ENCODE measurements at regions of chr2 and their contacts with region 1.

Region 1: GRCh38 chr2:198127627-198128026 is 323.2 kb downstream of the PLCL1 start:
- DNase-seq: peak in 4 of 5 donors; percentile 38 to 60 (median 44)
- ATAC-seq: peak; percentile 66 to 87 (median 78)
- H3K4me3 ChIP-seq: no peak overlapping the region
- H3K27ac ChIP-seq: no peak overlapping the region
- H3K4me1 ChIP-seq: peaks cover 0 to 19% (median 7%) of the 10 kb centered on the region in 12 donors
- H3K27me3 ChIP-seq: no peaks in the 10 kb centered on the region
- CTCF ChIP-seq: peak; percentile 49 to 81 (median 68)
- POLR2A ChIP-seq: no peak

Region 2: DNA sequence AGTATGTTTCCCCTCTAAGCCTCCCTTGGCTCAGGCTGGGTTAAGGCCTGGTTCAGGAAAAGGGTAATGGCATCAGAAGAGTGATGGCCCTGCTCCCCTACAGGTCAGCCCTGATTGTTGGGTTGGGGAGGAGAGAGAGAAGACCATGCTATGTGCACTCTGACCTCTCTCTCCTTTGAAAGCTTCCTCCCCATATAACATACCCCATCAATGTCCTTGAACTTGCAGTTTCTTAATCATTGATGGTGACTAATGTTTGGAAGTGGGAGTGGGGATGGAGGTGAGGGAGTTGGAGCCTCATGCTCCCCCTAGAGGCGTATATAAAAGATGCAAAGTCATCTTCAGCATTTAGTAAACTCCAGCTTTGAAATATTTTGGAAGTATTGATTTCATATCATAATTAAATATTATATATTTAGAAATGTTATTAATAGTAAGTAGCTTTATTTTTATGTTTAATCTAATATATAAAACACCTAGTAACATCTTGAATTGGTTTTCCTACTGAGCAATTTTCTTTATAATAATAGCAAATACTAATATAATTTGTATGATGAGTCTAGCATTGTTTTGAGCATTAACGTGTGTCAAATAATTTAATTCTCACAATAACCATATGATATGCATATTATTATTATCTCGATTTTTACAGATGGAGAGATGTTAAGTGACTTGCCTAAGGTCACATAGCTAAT is 314.4 kb before region 1 on chr2:
- intact Hi-C with region 1: loop called in 1 of 10 experiments (anchors 2 kb)
- DNase-seq: no peak
- ATAC-seq: peak in 1 of 4 donors; percentile 23
- H3K4me3 ChIP-seq: no peak overlapping the region
- H3K27ac ChIP-seq: no peak overlapping the region
- H3K4me1 ChIP-seq: peaks cover 0 to 26% (median 1%) of the 10 kb centered on the region in 12 donors
- H3K27me3 ChIP-seq: no peaks in the 10 kb centered on the region
- CTCF ChIP-seq: peak; percentile 31 to 60 (median 44)
- POLR2A ChIP-seq: no peak

Region 3: DNA sequence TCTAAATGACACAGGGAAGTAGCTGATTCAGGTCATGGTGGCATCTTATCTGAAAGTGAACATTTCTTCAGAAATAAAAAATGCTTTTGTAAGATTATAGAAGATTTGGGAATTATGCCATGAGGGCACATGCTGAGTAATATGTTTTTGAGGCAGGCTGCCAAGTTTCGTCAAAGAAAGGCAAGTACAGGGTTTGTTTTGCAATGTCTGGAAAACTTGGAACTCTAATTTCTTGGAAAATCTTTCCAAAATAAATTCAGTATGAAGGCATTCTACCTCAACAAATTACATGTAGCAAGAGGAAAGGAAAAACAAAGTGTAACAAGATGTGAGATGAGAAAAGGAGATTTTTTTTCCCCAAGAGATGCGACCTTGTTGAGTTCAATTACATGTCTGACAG is 155.6 kb before region 1 on chr2:
- intact Hi-C with region 1: loop called in 1 of 10 experiments (anchors 10 kb)
- DNase-seq: peak in 2 of 5 donors; percentile 32 to 43
- ATAC-seq: peak in 1 of 4 donors; percentile 38
- H3K4me3 ChIP-seq: no peak overlapping the region
- H3K27ac ChIP-seq: peak overlapping the region in 3 of 12 donors; percentile 12 to 42 (median 39)
- H3K4me1 ChIP-seq: peaks cover 0 to 55% (median 22%) of the 10 kb centered on the region in 12 donors
- H3K27me3 ChIP-seq: no peaks in the 10 kb centered on the region
- CTCF ChIP-seq: no peak
- POLR2A ChIP-seq: no peak

Region 4: GRCh38 chr2:197986977-197987376 is 140.7 kb before region 1 on chr2:
- intact Hi-C with region 1: loop called in 1 of 10 experiments (anchors 10 kb)
- DNase-seq: no peak
- ATAC-seq: no peak
- H3K4me3 ChIP-seq: no peak overlapping the region
- H3K27ac ChIP-seq: no peak overlapping the region
- H3K4me1 ChIP-seq: peaks cover 0 to 20% (median 1%) of the 10 kb centered on the region in 12 donors
- H3K27me3 ChIP-seq: no peaks in the 10 kb centered on the region
- CTCF ChIP-seq: no peak
- POLR2A ChIP-seq: no peak

Region 5: GRCh38 chr2:198080879-198081765 is 46.5 kb before region 1 on chr2:
- intact Hi-C with region 1: no loop called
- DNase-seq: no peak
- ATAC-seq: no peak
- H3K4me3 ChIP-seq: no peak overlapping the region
- H3K27ac ChIP-seq: no peak overlapping the region
- H3K4me1 ChIP-seq: peaks cover 0 to 9% (median 0%) of the 10 kb centered on the region in 12 donors
- H3K27me3 ChIP-seq: no peaks in the 10 kb centered on the region
- CTCF ChIP-seq: no peak
- POLR2A ChIP-seq: no peak

Region 6: DNA sequence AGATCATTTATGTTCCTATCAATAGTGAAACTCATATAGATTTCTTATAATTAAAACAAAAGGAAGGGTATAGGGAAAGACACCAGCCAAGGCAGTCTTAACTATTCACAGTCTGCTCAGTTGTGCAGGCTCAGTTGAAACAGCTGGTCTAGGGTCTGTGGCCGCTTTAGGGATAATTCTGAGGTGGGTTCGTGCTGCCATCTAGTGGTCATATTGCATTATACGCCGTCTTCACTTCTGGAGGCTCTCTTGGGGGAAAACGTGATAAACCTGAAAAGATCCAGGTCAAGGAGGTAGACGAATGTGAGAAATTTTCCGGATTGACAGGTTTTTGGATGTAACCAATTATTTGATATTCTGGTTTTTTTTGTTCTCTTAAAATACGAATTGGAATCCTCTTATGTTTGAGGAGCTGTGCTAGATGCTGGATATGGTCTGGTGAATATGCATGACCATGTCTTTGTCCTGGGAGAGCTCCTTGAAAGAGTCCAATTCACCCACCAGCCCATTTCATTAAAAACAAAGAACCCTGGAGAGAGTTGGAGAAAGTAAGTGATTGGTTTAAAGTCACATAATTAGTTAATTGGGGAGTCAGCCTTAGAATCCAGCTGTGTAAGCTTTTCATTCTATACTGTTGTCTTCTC is 169.2 kb after region 1 on chr2:
- intact Hi-C with region 1: loop called in 6 of 10 experiments (anchors 5 to 10 kb)
- DNase-seq: peak in 4 of 5 donors; percentile 25 to 41 (median 38)
- ATAC-seq: peak; percentile 64 to 82 (median 76)
- H3K4me3 ChIP-seq: no peak overlapping the region
- H3K27ac ChIP-seq: no peak overlapping the region
- H3K4me1 ChIP-seq: peaks cover 0 to 5% (median 0%) of the 10 kb centered on the region in 12 donors
- H3K27me3 ChIP-seq: no peaks in the 10 kb centered on the region
- CTCF ChIP-seq: peak; percentile 72 to 91 (median 82)
- POLR2A ChIP-seq: no peak

Region 7: GRCh38 chr2:198596985-198597384 is 469.4 kb after region 1 on chr2:
- intact Hi-C with region 1: no loop called
- DNase-seq: no peak
- ATAC-seq: no peak
- H3K4me3 ChIP-seq: no peak overlapping the region
- H3K27ac ChIP-seq: no peak overlapping the region
- H3K4me1 ChIP-seq: no peaks in the 10 kb centered on the region
- H3K27me3 ChIP-seq: no peaks in the 10 kb centered on the region
- CTCF ChIP-seq: no peak
- POLR2A ChIP-seq: no peak

Measured in heart left ventricle (tissue), 16 donors.